ENCODE measurements at regions of chr17 and their contacts with region 1.

Region 1: GRCh38 chr17:38485146-38485468 is 56.8 kb downstream of the ARHGAP23 start:
- DNase-seq: no peak
- H3K4me3 ChIP-seq: no peak overlapping the region
- H3K27ac ChIP-seq: no peak overlapping the region
- H3K4me1 ChIP-seq: no peaks in the 10 kb centered on the region
- H3K27me3 ChIP-seq: no peaks in the 10 kb centered on the region
- CTCF ChIP-seq: peak in 1 of 4 experiments; percentile 2
- POLR2A ChIP-seq: no peak

Region 2: GRCh38 chr17:38351412-38352222 is 133.5 kb before region 1 on chr17 and contains the start of gene SOCS7:
- intact Hi-C with region 1: loop called (anchors 10 kb)
- DNase-seq: peak; percentile 90
- H3K4me3 ChIP-seq: peak within 1 kb of the TSS; percentile 86 to 96
- H3K27ac ChIP-seq: peak within 1 kb of the TSS; percentile 75 to 89
- H3K4me1 ChIP-seq: peaks cover 11% of the 10 kb centered on the region
- H3K27me3 ChIP-seq: no peaks in the 10 kb centered on the region
- CTCF ChIP-seq: peak in 1 of 4 experiments; percentile 32
- POLR2A ChIP-seq: peak; percentile 77
- total RNA-seq, gene SOCS7: 14.6 to 61.9 TPM

Region 3: GRCh38 chr17:38421171-38421841 is 63.8 kb before region 1 on chr17:
- intact Hi-C with region 1: loop called (anchors 5 kb)
- DNase-seq: no peak
- H3K4me3 ChIP-seq: no peak overlapping the region
- H3K27ac ChIP-seq: peak overlapping the region in 1 of 2 donors; percentile 22
- H3K4me1 ChIP-seq: no peaks in the 10 kb centered on the region
- H3K27me3 ChIP-seq: no peaks in the 10 kb centered on the region
- CTCF ChIP-seq: no peak
- POLR2A ChIP-seq: no peak

Region 4: DNA sequence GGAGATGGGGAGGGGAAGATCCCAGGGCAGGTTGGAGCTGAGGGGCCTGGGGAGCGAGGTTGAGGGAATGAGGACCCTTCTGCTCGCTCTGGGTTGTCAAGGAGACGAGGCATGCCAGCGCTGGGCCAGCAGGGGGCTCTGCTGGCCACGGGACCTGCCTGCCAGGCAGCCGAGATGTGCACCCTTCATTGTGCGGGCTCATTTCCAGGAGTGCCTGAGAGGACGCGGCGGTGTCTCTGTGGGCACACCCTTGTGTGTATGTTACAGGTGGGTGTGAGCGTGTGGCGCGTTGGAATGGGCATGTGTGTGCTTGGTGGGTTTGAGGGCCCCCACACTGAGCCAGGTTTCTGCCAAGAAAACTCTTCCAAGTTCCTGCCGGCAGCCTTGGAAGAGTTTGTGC is 41.0 kb before region 1 on chr17:
- intact Hi-C with region 1: loop called (anchors 5 kb)
- DNase-seq: peak; percentile 69
- H3K4me3 ChIP-seq: no peak overlapping the region
- H3K27ac ChIP-seq: no peak overlapping the region
- H3K4me1 ChIP-seq: no peaks in the 10 kb centered on the region
- H3K27me3 ChIP-seq: no peaks in the 10 kb centered on the region
- CTCF ChIP-seq: peak; percentile 72 to 97 (median 89)
- POLR2A ChIP-seq: no peak

Region 5: GRCh38 chr17:38667099-38667786 is 182.1 kb after region 1 on chr17:
- intact Hi-C with region 1: loop called (anchors 5 kb)
- DNase-seq: peak; percentile 41
- H3K4me3 ChIP-seq: no peak overlapping the region
- H3K27ac ChIP-seq: no peak overlapping the region
- H3K4me1 ChIP-seq: no peaks in the 10 kb centered on the region
- H3K27me3 ChIP-seq: no peaks in the 10 kb centered on the region
- CTCF ChIP-seq: peak; percentile 73 to 95 (median 89)
- POLR2A ChIP-seq: no peak

Measured in prostate gland (tissue), 2 donors.